HepG2 (cell line): ENCODE measurements at regions of chr12 and their contacts with region 1.

Region 1: DNA sequence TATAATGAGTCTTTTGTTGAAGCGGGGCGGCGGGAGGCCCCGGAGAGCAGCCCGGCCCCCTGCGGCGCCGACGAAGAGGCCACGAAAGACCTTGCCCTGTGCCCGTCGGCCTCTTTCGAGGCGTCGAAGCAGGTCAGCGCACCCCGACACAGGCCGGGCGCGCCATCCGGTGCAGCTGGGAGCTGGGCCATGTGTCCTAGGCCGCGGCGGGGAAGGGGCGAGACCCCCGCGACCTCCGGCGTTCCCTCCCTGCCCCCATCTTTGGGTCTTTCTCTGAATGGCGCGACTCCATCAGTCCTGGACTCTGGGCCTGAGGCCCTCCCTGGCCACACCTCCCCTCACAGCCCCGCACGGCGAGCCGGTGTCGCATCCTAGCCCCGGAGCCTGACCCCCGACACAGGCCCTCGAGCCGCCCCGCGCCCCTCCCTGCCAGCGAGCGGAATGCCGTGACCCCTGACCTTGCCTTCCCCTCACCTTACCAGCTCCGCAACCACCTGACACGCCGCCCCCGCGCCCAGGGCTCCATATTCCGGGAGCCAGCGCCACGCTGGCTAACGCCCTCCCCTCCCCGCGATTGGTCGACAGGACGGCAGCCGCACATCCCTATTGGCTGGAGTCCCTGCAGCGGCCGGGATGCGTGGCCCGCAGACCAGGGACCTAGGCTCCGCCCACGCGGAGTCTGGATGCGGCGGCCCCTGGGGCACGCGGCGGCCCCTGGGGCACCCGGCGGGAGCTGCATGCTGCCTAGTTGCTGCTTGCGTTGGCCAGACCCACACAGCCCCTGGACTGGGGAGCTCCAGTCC is at the start of gene SLC11A2:
- DNase-seq: peak; percentile 94
- ATAC-seq: peak; percentile 91
- H3K4me3 ChIP-seq: peak within 1 kb of the TSS; percentile 59 to 79 (median 79)
- H3K27ac ChIP-seq: peak within 1 kb of the TSS; percentile 99
- H3K4me1 ChIP-seq: peaks cover 73% of the 10 kb centered on the region
- H3K27me3 ChIP-seq: no peaks in the 10 kb centered on the region; a peak in 1 of 5 replicates
- CTCF ChIP-seq: peak; percentile 8
- EP300 ChIP-seq: peak in 1 of 2 experiments; percentile 77; a peak in 1 of 4 replicates
- POLR2A ChIP-seq: peak; percentile 73 to 83
- RAD21 ChIP-seq: peak; percentile 42
- total RNA-seq, gene SLC11A2: 46.0 and 71.7 TPM in 2 replicates

Region 2: GRCh38 chr12:49121047-49121696 is 1904.9 kb before region 1 on chr12:
- CTCF ChIA-PET with region 1: no interaction called
- POLR2A ChIA-PET with region 1: no interaction called
- in situ Hi-C with region 1: no loop called
- intact Hi-C with region 1: loop called (anchors 10 kb)
- DNase-seq: peak; percentile 79
- ATAC-seq: peak; percentile 72
- H3K4me3 ChIP-seq: no peak overlapping the region
- H3K27ac ChIP-seq: no peak overlapping the region
- H3K4me1 ChIP-seq: peaks cover 9% of the 10 kb centered on the region
- H3K27me3 ChIP-seq: peaks cover 0 to 9% of the 10 kb centered on the region in 2 experiments; a peak in 2 of 5 replicates
- CTCF ChIP-seq: peak; percentile 88
- EP300 ChIP-seq: no peak
- POLR2A ChIP-seq: no peak
- RAD21 ChIP-seq: peak; percentile 51; the same call in 1 of the 2 replicates

Region 3: GRCh38 chr12:50825372-50825838 is 200.6 kb before region 1 on chr12:
- CTCF ChIA-PET with region 1: interaction called, 4 read pairs
- POLR2A ChIA-PET with region 1: interaction called, 11 read pairs
- in situ Hi-C with region 1: loop called (anchors 10 kb)
- intact Hi-C with region 1: loop called (anchors 2 kb)
- DNase-seq: peak; percentile 62
- ATAC-seq: peak; percentile 42
- H3K4me3 ChIP-seq: peak overlapping the region in 2 of 3 experiments; percentile 21 to 24; a peak in 2 of 6 replicates
- H3K27ac ChIP-seq: peak overlapping the region; percentile 47
- H3K4me1 ChIP-seq: peaks cover 22% of the 10 kb centered on the region
- H3K27me3 ChIP-seq: no peaks in the 10 kb centered on the region
- CTCF ChIP-seq: peak; percentile 58
- EP300 ChIP-seq: no peak
- POLR2A ChIP-seq: no peak
- RAD21 ChIP-seq: no peak; the same call in 1 of the 2 replicates

Region 4: GRCh38 chr12:50934981-50935807 is 90.8 kb before region 1 on chr12:
- CTCF ChIA-PET with region 1: no interaction called
- POLR2A ChIA-PET with region 1: interaction called, 9 read pairs
- in situ Hi-C with region 1: no loop called
- intact Hi-C with region 1: loop called (anchors 1 kb)
- DNase-seq: peak; percentile 57
- ATAC-seq: peak; percentile 26
- H3K4me3 ChIP-seq: peak overlapping the region in 2 of 3 experiments; percentile 14 to 16; a peak in 1 of 6 replicates
- H3K27ac ChIP-seq: peak overlapping the region; percentile 93
- H3K4me1 ChIP-seq: peaks cover 66% of the 10 kb centered on the region
- H3K27me3 ChIP-seq: no peaks in the 10 kb centered on the region
- CTCF ChIP-seq: no peak
- EP300 ChIP-seq: peak in 1 of 2 experiments; percentile 41; a peak in 1 of 4 replicates
- POLR2A ChIP-seq: no peak
- RAD21 ChIP-seq: no peak

Region 5: GRCh38 chr12:50986966-50987737 is 38.9 kb before region 1 on chr12:
- CTCF ChIA-PET with region 1: no interaction called
- POLR2A ChIA-PET with region 1: interaction called, 12 read pairs
- in situ Hi-C with region 1: no loop called
- intact Hi-C with region 1: no loop called
- DNase-seq: peak; percentile 46
- ATAC-seq: peak; percentile 91
- H3K4me3 ChIP-seq: no peak overlapping the region
- H3K27ac ChIP-seq: no peak overlapping the region
- H3K4me1 ChIP-seq: peaks cover 23% of the 10 kb centered on the region
- H3K27me3 ChIP-seq: no peaks in the 10 kb centered on the region
- CTCF ChIP-seq: peak; percentile 87
- EP300 ChIP-seq: no peak
- POLR2A ChIP-seq: no peak
- RAD21 ChIP-seq: peak; percentile 71

Region 6: GRCh38 chr12:51047655-51048540 is 21.9 kb after region 1 on chr12 and contains the start of gene LETMD1:
- CTCF ChIA-PET with region 1: no interaction called
- POLR2A ChIA-PET with region 1: interaction called, 10 read pairs
- in situ Hi-C with region 1: no loop called
- intact Hi-C with region 1: no loop called
- DNase-seq: peak; percentile 98
- ATAC-seq: peak; percentile 99
- H3K4me3 ChIP-seq: peak within 1 kb of the TSS; percentile 75 to 86 (median 81)
- H3K27ac ChIP-seq: peak within 1 kb of the TSS; percentile 94
- H3K4me1 ChIP-seq: peaks cover 22% of the 10 kb centered on the region
- H3K27me3 ChIP-seq: no peaks in the 10 kb centered on the region; a peak in 1 of 5 replicates
- CTCF ChIP-seq: peak; percentile 97
- EP300 ChIP-seq: peak in 1 of 2 experiments; percentile 5; a peak in 1 of 4 replicates
- POLR2A ChIP-seq: peak; percentile 88 to 89
- RAD21 ChIP-seq: peak; percentile 96
- total RNA-seq, gene LETMD1: 31.3 and 43.3 TPM in 2 replicates

Region 7: GRCh38 chr12:51198568-51199365 is 172.7 kb after region 1 on chr12:
- CTCF ChIA-PET with region 1: no interaction called
- POLR2A ChIA-PET with region 1: no interaction called
- in situ Hi-C with region 1: no loop called
- intact Hi-C with region 1: no loop called
- DNase-seq: peak; percentile 60
- ATAC-seq: peak; percentile 82
- H3K4me3 ChIP-seq: peak overlapping the region; percentile 17 to 69 (median 44); a peak in 5 of 6 replicates
- H3K27ac ChIP-seq: no peak overlapping the region
- H3K4me1 ChIP-seq: peaks cover 35% of the 10 kb centered on the region
- H3K27me3 ChIP-seq: peaks cover 0 to 4% of the 10 kb centered on the region in 2 experiments; a peak in 1 of 5 replicates
- CTCF ChIP-seq: no peak
- EP300 ChIP-seq: 0 out of 4 replicates have a peak, but pooled peaks of 1 of the 2 experiments have one; percentile 25
- POLR2A ChIP-seq: no peak
- RAD21 ChIP-seq: no peak

Region 8: DNA sequence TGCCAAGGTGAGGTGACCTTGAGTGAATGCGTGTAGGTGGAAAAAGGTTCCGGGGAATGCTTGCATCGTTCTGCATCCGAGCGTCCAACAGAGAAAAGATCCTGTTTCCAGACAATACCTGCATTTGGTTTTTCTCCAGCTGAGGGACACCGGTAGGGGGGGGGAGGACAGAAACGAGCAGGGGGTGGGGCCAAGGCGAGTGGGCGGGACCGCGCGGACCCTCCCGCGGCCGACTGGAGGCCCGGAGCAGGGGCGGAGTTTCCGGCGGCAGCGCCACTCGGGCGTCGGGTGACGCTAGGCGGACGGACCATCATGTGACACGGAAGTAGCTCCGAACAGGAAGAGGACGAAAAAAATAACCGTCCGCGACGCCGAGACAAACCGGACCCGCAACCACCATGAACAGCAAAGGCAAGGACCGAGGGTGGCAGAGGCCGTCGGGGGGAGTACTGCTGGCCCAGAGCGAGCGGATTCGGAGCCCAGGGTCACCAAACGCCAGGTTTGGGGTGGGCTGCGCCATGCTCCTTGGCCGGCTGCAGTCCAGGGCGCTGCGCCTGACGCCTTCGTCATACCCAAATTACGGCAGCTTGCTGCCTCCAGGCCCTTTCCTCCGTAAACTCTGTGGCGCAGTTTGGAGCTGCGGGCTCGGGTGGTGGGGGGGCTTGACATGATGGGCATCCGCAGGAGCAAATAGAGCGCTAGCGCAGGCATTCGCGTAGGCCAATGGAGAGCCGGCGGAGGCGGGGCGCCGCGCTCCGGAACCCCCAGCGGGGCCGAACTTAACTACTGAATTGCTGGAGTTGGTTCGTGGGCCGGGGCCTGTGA is 212.7 kb after region 1 on chr12 and contains the start of gene DAZAP2:
- CTCF ChIA-PET with region 1: no interaction called
- POLR2A ChIA-PET with region 1: interaction called, 12 read pairs
- in situ Hi-C with region 1: no loop called
- intact Hi-C with region 1: no loop called
- DNase-seq: peak; percentile 88
- ATAC-seq: peak; percentile 97
- H3K4me3 ChIP-seq: peak within 1 kb of the TSS; percentile 99 to 100 (median 100)
- H3K27ac ChIP-seq: peak within 1 kb of the TSS; percentile 100
- H3K4me1 ChIP-seq: peaks cover 18% of the 10 kb centered on the region
- H3K27me3 ChIP-seq: no peaks in the 10 kb centered on the region; a peak in 1 of 5 replicates
- CTCF ChIP-seq: no peak
- EP300 ChIP-seq: no peak
- POLR2A ChIP-seq: peak; percentile 59 to 86
- RAD21 ChIP-seq: peak; percentile 37; the same call in 1 of the 2 replicates
- total RNA-seq, gene DAZAP2: 64.5 and 84.2 TPM in 2 replicates